Esophagus squamous epithelium (tissue), 5 donors: ENCODE measurements at regions of chr13 and their contacts with region 1.

Region 1: DNA sequence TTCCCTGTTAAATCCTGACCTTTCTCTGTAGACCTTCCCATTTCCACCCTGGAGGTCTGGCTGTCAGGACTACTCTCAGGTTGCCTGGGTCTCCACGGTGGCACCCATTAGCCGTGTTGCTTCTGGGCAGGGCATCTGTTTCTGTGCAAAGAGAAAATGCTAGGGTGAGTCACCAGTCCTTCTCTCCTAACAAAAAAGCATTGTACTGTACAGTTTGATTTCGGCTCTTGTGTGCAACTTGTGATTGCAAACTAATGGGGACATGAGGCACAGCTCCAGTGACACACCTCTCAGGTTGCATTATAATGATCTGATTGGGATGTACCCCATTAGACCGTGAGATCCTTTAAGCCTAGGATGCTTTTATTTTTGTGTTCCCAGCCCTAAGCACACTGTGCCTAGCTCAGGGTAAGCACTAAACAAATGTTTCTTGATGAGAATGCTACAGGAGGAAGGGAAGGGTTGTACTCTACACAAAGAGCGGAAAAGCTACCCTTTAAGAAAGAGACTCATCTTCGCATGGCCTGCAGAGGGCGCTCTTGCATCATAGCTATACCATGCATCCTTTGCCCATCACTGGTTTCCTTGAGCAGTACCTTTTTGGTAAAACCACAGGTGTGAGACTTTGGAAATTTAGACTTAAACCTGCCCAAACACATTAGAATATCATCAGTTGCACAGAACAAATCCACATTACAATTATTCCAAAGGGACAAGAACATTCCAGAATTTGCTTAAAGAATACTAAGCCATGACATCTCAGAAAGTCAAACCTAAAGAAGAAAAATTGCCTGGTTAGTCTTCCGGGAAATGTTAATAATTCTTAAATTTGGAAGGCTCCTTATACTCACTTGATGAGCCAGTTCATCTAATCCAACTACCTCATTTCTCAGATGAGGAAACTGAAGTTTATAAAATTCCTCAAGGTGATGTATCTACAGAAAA is 20.3 kb upstream of the TRIM13 start:
- DNase-seq: peak; percentile 2
- H3K4me3 ChIP-seq: no peak overlapping the region
- H3K27ac ChIP-seq: peak overlapping the region in 1 of 4 donors; percentile 18
- H3K4me1 ChIP-seq: peaks cover 0 to 13% (median 0%) of the 10 kb centered on the region in 3 donors
- H3K27me3 ChIP-seq: no peaks in the 10 kb centered on the region
- CTCF ChIP-seq: peak; percentile 73 to 90 (median 88)
- POLR2A ChIP-seq: no peak

Region 2: DNA sequence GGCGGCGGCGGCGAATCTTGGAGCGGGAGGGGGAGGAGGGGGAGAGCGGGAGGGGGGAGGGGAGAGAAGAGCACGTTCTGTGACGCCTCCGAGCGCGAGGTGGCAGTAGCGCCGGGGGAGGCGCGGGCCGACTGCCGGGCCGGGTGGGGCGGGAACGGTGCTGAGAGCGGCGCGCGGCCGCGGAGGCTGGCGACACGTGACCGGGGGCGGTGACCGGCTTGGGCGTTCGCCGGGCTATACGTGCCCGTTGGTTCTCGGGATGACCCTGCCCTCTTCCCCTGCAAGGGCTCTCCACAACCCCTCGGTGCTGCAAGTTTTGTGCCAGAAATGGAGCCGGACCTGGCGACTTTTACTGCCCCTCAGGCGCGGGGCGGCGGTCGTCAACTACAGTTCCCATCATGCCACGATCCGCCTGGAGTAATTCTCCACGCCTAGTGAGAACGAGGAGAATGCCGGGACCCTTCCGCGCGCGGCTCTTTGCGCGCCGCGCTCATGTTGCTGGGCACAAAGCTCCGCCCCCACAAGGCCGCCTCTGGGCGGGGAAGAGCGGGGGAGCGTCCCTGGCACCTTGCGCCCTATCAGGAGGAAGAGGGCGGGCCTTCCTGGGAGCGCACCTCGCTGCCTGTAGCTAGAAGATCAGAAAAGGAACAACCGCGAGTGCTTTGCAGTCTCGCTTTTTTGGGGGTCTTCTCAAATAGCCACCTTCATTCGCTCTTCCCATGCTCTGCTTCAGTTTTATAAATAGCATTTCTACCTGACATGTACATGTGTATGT is 183.8 kb before region 1 on chr13 and contains the start of gene KPNA3:
- intact Hi-C with region 1: no loop called
- DNase-seq: peak; percentile 91
- H3K4me3 ChIP-seq: peak within 1 kb of the TSS; percentile 80 to 100 (median 91)
- H3K27ac ChIP-seq: peak within 1 kb of the TSS; percentile 88 to 99 (median 99)
- H3K4me1 ChIP-seq: peaks cover 5 to 40% (median 13%) of the 10 kb centered on the region in 3 donors
- H3K27me3 ChIP-seq: no peaks in the 10 kb centered on the region
- CTCF ChIP-seq: peak in 2 of 6 experiments; percentile 7 to 30
- POLR2A ChIP-seq: peak in 3 of 4 donors; percentile 35 to 71 (median 71)
- total RNA-seq, gene KPNA3: 19.7 to 35.0 (median 25.4) TPM

Region 3: DNA sequence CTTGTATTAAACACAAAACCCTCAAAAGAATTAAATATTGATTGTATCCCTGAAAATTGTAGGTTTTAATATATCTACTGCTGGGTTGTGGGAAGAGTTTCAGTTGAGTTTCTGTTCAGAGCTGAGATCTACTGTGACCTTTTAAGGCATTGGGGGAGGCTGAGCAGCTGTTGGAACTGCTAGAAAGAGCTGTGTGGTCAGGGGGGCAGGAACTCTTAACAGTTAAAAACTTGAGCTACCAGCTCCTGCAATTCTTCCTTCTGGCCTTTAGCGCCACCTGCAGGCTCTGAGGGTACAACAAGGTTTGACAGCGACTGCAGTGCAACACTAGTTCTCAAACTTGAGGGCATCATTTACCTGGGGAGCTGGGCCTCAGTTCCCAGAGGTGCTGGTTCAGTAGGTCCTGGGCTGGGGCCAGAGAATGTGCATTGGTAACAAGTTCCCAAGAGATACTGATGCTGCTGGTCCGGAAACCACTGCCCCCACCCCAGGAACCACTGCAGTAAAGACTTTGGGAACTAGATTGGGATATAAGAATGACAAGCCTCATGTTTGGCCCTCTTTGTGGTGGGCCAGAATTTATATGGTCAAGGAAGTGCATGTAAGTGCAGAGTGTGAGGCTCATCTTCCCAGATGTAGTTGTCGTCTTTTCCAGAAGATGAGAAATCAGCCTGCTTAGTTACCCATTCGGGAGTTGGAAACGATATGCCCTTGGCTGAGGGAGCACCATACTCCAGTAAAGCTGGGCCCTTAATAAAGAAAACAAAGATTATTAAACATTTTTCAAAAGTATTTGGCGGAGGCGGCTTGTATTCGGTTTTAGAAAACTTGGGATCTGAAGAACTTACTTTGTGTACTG is 935.6 kb after region 1 on chr13:
- intact Hi-C with region 1: loop called (anchors 5 kb)
- DNase-seq: peak; percentile 31
- H3K4me3 ChIP-seq: peak overlapping the region in 1 of 4 donors; percentile 9
- H3K27ac ChIP-seq: peak overlapping the region in 3 of 4 donors; percentile 91 to 95 (median 92)
- H3K4me1 ChIP-seq: peaks cover 13 to 59% (median 23%) of the 10 kb centered on the region in 3 donors
- H3K27me3 ChIP-seq: no peaks in the 10 kb centered on the region
- CTCF ChIP-seq: peak; percentile 69 to 91 (median 83)
- POLR2A ChIP-seq: no peak

Region 4: DNA sequence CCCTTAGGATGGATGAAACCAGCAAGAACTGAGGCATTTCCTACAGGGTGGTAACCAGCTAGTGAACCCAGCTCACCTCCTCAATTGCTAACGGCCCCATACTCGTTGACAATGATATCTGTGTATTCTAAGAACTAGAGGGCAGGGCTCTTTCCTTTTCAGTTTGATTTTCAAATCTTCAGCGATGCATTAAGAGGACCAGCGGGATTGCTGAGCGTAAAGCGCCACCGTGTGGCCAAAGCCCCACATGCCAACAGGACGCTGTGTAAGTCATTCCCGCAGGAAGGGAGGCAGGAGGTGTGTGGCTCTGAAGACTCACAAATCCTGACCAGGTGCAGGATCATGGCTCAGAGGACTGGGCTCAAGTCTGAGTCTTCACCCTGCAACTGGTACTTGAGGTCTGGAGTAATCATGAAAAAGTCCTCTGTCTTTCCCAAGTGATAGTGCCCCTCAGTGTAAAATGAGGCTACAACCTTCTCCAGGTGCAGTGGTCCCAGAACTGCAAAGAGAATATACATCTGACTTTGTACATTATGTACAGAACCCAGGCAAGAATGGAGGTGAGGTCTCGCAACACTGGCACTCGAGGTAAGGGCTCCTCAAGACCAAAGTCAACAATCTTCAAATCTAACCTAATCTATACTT is 1093.5 kb after region 1 on chr13:
- intact Hi-C with region 1: loop called (anchors 10 kb)
- DNase-seq: no peak
- H3K4me3 ChIP-seq: no peak overlapping the region
- H3K27ac ChIP-seq: no peak overlapping the region
- H3K4me1 ChIP-seq: peaks cover 0 to 15% (median 0%) of the 10 kb centered on the region in 3 donors
- H3K27me3 ChIP-seq: peaks cover 0 to 18% (median 0%) of the 10 kb centered on the region in 4 donors
- CTCF ChIP-seq: peak; percentile 86 to 96 (median 90)
- POLR2A ChIP-seq: no peak